Naive thymus-derived CD4-positive, alpha-beta T cell (primary cell): ENCODE measurements at regions of chr7 and their contacts with region 1.

Region 1: DNA sequence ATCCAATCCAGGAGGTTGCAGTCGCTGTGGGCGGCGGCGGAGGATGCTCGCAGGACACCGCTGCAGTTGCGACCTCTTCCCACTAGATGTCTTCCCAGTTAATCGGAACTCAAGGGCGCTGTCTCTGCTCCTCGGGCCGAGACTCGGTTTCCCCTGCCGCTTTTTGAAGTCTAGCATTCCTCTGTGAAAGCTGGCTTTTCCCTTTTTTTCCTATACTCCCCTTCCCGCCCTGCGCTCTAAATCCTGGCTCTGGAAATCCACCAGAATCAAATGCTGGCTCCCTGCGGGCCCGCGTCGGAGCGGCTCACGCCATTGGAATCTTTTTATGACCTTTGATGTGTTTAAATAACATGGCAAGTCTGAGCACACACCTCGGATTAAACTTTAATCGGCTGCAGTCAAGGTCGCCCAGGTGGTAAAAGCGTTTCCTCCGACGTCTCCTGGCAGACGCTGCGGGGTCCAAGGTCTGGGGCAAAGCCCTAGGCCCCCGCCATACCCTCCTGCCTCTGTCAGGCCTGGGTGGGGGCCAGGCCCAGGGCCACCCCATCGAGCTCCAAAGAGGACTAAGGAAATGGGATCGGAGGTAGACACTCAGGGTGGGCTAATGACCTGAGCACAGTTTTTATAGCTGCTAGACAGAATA is 10.7 kb upstream of the HOXA13 start:
- DNase-seq: peak in 2 of 9 donors; percentile 28 to 47
- ATAC-seq: peak; percentile 74
- H3K4me3 ChIP-seq: no peak overlapping the region
- H3K4me3 Mint-ChIP-seq: peak overlapping the region; percentile 35 to 79 (median 66)
- H3K27ac ChIP-seq: no peak overlapping the region
- H3K27ac Mint-ChIP-seq: no peak overlapping the region
- H3K4me1 ChIP-seq: peaks cover 4 to 7% of the 10 kb centered on the region in 2 donors
- H3K4me1 Mint-ChIP-seq: peaks cover 0 to 29% (median 18%) of the 10 kb centered on the region in 7 donors
- H3K27me3 ChIP-seq: peaks cover 21 to 64% of the 10 kb centered on the region in 2 donors
- H3K27me3 Mint-ChIP-seq: peaks cover 80 to 97% (median 93%) of the 10 kb centered on the region in 5 donors

Region 2: DNA sequence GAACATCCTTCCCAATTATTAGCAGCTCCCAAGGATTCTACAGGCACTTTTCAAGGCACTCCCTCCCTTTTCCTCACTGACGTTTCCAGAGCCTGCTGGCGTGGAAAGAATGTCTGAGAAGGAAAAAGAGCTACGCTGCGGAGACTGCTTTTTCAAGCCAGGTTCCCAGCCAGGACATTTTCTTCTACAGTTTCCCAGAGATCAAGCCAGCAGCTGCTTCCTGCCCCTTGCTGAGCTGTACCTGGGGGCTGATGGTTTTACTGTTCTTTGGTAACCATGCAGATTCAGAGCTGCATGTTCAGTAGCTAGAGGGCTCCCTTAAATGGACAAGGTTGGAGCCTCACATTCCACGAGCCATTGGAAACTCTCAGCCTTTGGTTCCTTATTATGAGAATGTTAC is 165.4 kb after region 1 on chr7:
- CTCF ChIA-PET with region 1: no interaction called
- POLR2A ChIA-PET with region 1: no interaction called
- intact Hi-C with region 1: no loop called
- DNase-seq: no peak
- ATAC-seq: no peak
- H3K4me3 ChIP-seq: no peak overlapping the region
- H3K4me3 Mint-ChIP-seq: no peak overlapping the region
- H3K27ac ChIP-seq: no peak overlapping the region
- H3K27ac Mint-ChIP-seq: no peak overlapping the region
- H3K4me1 ChIP-seq: no peaks in the 10 kb centered on the region
- H3K4me1 Mint-ChIP-seq: no peaks in the 10 kb centered on the region
- H3K27me3 ChIP-seq: no peaks in the 10 kb centered on the region
- H3K27me3 Mint-ChIP-seq: peaks cover 6 to 66% (median 41%) of the 10 kb centered on the region in 5 donors

Region 3: DNA sequence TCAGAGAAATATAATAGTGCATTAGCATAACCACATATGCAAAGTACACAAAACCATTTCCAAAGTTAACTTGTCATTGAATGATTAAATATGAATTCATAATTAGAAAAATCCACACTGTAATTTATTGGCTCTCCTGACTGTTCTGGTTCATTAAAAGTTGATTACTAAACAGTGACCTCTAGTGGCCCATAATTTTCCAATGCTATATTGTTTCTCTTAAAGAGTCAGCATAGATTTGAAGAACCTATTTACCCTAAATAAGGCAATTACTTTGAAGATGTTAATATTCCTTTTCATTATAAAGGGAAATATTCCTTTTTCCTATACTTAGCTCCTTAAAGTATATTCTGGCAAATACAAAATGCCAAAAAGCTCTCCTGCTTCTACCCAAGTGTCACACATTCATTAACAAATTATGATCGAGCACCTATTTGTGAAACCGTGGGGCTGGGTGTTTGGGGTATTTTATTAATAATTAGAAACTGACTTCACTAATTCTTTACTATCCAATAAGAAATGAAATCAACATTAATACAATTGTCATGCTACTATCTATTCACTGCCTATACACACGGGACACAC is 365.9 kb after region 1 on chr7:
- CTCF ChIA-PET with region 1: no interaction called
- POLR2A ChIA-PET with region 1: no interaction called
- intact Hi-C with region 1: loop called in 1 of 2 experiments (anchors 1 kb)
- DNase-seq: peak in 5 of 9 donors; percentile 15 to 38 (median 29)
- ATAC-seq: peak; percentile 67
- H3K4me3 ChIP-seq: no peak overlapping the region
- H3K4me3 Mint-ChIP-seq: no peak overlapping the region
- H3K27ac ChIP-seq: no peak overlapping the region
- H3K27ac Mint-ChIP-seq: no peak overlapping the region
- H3K4me1 ChIP-seq: no peaks in the 10 kb centered on the region
- H3K4me1 Mint-ChIP-seq: peaks cover 0 to 6% (median 0%) of the 10 kb centered on the region in 7 donors
- H3K27me3 ChIP-seq: no peaks in the 10 kb centered on the region
- H3K27me3 Mint-ChIP-seq: peaks cover 0 to 3% (median 0%) of the 10 kb centered on the region in 5 donors

Region 4: DNA sequence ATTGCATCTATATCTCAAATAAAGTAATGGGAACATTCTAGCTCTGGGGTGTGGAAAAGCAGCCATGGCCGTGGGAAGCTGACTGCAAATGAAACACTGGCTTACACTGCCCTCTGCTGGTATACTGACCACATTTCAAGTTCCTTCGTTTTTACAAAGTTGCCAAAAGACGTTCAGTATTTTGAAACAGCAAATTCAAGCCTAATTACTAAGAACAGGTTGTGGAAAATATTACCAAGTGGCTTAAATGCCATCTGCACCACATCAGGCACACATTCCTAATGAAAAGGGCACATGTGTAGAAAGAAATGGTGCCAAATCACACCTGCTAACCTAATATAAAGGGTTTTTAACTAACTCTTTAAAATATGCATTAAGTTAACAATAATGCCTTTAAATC is 886.2 kb after region 1 on chr7:
- CTCF ChIA-PET with region 1: interaction called, 3 read pairs
- POLR2A ChIA-PET with region 1: no interaction called
- intact Hi-C with region 1: loop called in 1 of 2 experiments (anchors 5 kb)
- DNase-seq: peak in 7 of 9 donors; percentile 26 to 62 (median 47)
- ATAC-seq: peak; percentile 84
- H3K4me3 ChIP-seq: no peak overlapping the region
- H3K4me3 Mint-ChIP-seq: no peak overlapping the region
- H3K27ac ChIP-seq: no peak overlapping the region
- H3K27ac Mint-ChIP-seq: no peak overlapping the region
- H3K4me1 ChIP-seq: no peaks in the 10 kb centered on the region
- H3K4me1 Mint-ChIP-seq: peaks cover 0 to 25% (median 10%) of the 10 kb centered on the region in 7 donors
- H3K27me3 ChIP-seq: no peaks in the 10 kb centered on the region
- H3K27me3 Mint-ChIP-seq: no peaks in the 10 kb centered on the region